PC-9 (cell line): ENCODE measurements at regions of chr11 and their contacts with region 1.

Region 1: GRCh38 chr11:72683782-72684200 is 9.6 kb upstream of the PDE2A start:
- DNase-seq: peak in 1 of 2 experiments; percentile 71
- H3K4me3 ChIP-seq: no peak overlapping the region
- H3K27ac ChIP-seq: no peak overlapping the region
- H3K4me1 ChIP-seq: 0 out of 2 replicates have a peak, but pooled peaks cover 3% of the 10 kb centered on the region
- H3K27me3 ChIP-seq: 0 out of 2 replicates have a peak, but pooled peaks cover 5% of the 10 kb centered on the region
- CTCF ChIP-seq: peak; percentile 97

Region 2: GRCh38 chr11:72446902-72447769 is 236.7 kb before region 1 on chr11:
- CTCF ChIA-PET with region 1: interaction called, 21 read pairs
- POLR2A ChIA-PET with region 1: no interaction called
- intact Hi-C with region 1: no loop called
- DNase-seq: peak in 1 of 2 experiments; percentile 74
- H3K4me3 ChIP-seq: no peak overlapping the region
- H3K27ac ChIP-seq: no peak overlapping the region
- H3K4me1 ChIP-seq: no peaks in the 10 kb centered on the region
- H3K27me3 ChIP-seq: no peaks in the 10 kb centered on the region; the same call in 1 of the 2 replicates
- CTCF ChIP-seq: peak; percentile 89

Region 3: GRCh38 chr11:72471005-72471898 is 212.5 kb before region 1 on chr11:
- CTCF ChIA-PET with region 1: interaction called, 19 read pairs
- POLR2A ChIA-PET with region 1: interaction called, 3 read pairs
- intact Hi-C with region 1: loop called (anchors 1 kb)
- DNase-seq: peak; percentile 52 to 64
- H3K4me3 ChIP-seq: no peak overlapping the region
- H3K27ac ChIP-seq: no peak overlapping the region
- H3K4me1 ChIP-seq: no peaks in the 10 kb centered on the region
- H3K27me3 ChIP-seq: peaks cover 14% of the 10 kb centered on the region; the same call in 1 of the 2 replicates
- CTCF ChIP-seq: peak; percentile 96

Region 4: DNA sequence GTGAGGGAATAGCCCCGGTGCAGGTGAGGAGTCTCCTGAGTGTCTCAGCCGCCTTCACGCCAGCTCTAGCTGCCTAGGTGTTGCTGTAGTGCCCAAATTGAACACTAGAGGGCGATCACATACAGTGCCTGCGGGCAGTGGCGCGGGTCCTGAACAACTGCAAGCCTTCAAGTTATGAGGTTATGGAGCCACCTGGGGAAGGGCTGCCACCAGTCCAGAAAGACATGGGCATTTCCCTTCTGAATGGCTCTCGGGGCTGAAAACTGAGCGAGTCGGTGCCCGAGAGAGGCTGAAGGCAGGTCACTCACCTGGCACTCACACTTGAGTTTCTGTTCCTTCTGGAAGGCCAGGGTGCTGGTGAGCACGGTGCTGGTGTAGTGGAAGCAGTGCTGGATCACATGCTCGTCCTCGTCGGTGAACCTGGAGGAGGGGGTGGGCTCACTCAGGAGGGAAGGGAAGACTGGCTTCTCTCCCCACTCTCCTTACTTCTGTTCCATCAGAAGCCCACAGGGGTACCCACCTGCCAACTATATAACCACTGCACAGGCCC is 98.0 kb before region 1 on chr11:
- CTCF ChIA-PET with region 1: interaction called, 11 read pairs
- POLR2A ChIA-PET with region 1: no interaction called
- intact Hi-C with region 1: loop called (anchors 1 kb)
- DNase-seq: peak in 1 of 2 experiments; percentile 66
- H3K4me3 ChIP-seq: no peak overlapping the region
- H3K27ac ChIP-seq: no peak overlapping the region
- H3K4me1 ChIP-seq: no peaks in the 10 kb centered on the region
- H3K27me3 ChIP-seq: no peaks in the 10 kb centered on the region
- CTCF ChIP-seq: peak; percentile 97

Region 5: DNA sequence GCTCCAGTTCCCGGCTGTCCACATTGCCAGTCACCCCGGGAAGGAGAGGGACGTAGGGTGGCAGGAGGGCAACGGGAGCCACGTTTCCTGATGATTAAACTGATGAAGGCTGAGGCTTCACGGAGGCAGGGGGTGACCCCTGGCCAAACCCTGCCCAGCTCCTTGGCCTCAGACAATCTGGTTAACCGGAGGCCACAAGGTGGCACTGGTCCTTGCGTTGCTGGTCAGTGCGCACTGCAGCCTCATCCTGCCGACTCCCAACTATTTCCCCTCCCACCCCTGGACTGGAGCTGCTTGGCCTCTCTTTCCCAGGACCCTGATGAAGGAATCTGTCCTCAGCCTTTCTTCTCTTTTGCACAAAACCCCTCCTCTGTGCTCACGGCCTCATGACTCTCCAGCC is 84.9 kb before region 1 on chr11:
- CTCF ChIA-PET with region 1: interaction called, 14 read pairs
- POLR2A ChIA-PET with region 1: no interaction called
- intact Hi-C with region 1: no loop called
- DNase-seq: peak in 1 of 2 experiments; percentile 40
- H3K4me3 ChIP-seq: no peak overlapping the region
- H3K27ac ChIP-seq: no peak overlapping the region
- H3K4me1 ChIP-seq: no peaks in the 10 kb centered on the region; the same call in 1 of the 2 replicates
- H3K27me3 ChIP-seq: no peaks in the 10 kb centered on the region
- CTCF ChIP-seq: peak; percentile 48

Region 6: DNA sequence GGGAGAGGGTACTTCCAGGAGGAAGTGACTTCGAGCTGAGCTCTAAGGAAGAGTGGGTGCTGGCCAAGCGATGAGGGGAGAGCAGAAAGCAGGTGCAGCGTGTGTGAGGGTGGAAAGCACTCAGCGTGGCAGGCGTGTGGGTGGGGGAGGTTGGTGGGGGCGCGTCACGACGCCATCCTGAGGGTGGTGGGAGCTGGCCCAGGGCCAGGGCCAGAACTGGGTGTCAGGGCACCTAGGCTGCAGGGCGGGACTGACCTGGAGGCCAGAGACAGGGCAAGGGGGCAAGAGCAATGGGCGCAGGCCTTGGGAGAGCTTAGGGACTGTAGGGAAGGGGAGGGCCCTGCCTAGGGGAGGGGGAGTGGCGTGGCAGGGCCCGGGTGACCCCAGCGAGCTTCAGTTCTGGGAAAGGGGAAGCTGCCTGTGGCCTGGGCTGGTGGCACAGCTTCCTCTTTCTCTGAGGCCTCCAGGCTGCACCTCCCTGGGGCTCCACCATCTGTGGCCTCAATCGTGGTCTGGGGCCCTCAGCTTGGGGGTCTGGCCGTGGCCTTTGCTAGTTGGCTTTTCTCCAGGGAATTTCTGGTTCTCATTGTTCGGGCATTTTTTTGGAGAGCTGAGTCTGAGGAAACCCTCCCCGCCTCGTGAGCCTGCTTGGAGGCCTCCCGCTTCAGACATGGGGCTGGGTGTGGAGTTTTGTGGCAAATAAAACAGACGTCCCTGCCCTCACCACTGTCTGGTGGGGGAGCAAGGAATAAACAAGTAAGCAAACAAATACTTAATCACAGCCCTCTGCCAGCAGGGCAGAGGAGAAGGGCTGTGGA is 701.3 kb after region 1 on chr11:
- CTCF ChIA-PET with region 1: no interaction called
- POLR2A ChIA-PET with region 1: no interaction called
- intact Hi-C with region 1: loop called (anchors 10 kb)
- DNase-seq: no peak
- H3K4me3 ChIP-seq: no peak overlapping the region
- H3K27ac ChIP-seq: no peak overlapping the region
- H3K4me1 ChIP-seq: 0 out of 2 replicates have a peak, but pooled peaks cover 14% of the 10 kb centered on the region
- H3K27me3 ChIP-seq: no peaks in the 10 kb centered on the region
- CTCF ChIP-seq: no peak